Right lobe of liver (tissue), 6 donors: ENCODE measurements at regions of chrX and their contacts with region 1.

Region 1: GRCh38 chrX:154980330-154981096 is 42.0 kb downstream of the F8 start:
- DNase-seq: peak; percentile 55 to 73 (median 72)
- ATAC-seq: peak; percentile 98 to 99 (median 99)
- H3K4me3 ChIP-seq: peak overlapping the region; percentile 25 to 50 (median 34)
- H3K27ac ChIP-seq: no peak overlapping the region
- H3K4me1 ChIP-seq: no peaks in the 10 kb centered on the region
- H3K27me3 ChIP-seq: no peaks in the 10 kb centered on the region
- CTCF ChIP-seq: peak; percentile 69 to 85 (median 83)
- POLR2A ChIP-seq: no peak

Region 2: DNA sequence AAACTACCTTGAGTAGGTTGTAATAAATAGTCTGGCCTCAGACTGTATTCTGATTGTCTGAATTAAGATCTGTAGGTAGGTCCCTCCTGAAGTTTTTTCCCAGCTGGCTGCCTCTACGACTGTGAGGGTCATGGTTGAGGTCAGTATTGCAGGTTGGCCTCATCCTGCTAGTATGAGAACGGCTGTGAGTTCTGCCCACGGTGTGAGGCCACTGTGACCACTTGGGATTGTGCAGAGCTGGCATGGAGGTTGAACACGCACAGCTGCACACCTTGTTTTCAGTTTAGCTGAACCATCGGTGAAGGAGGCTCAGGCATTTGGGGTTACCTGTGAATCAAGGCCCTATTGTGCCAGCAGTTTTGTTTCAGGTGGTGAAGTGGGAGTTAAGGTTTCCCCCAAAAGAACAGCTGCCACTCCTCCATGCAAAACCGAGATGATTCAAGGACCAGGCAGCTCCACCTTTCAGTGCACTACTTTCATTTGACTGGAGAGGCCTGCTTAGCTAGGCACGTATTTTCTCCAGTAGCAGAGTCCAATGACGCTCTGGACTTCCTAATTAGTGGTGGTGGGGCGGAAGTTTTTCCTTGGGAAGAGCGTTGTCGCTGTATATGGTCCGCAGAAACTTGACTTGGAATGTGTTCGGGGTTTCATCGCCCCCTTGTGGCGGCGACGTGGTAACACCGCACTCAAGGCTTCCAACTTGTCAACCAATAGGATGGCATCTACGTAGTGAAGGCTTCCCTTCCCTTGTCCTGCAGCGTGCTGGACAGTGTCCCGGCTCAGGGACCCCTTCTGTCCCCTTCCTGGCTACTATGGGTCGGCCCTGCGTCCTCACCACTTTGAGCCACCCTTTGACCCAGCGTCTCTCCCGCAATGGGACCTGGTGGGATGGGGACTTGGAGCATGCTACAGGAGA is 76.6 kb after region 1 on chrX:
- intact Hi-C with region 1: loop called in 1 of 2 experiments (anchors 10 kb)
- DNase-seq: peak; percentile 59 to 69 (median 65)
- ATAC-seq: peak; percentile 84 to 94 (median 90)
- H3K4me3 ChIP-seq: no peak overlapping the region
- H3K27ac ChIP-seq: peak overlapping the region in 2 of 3 donors; percentile 8 to 53
- H3K4me1 ChIP-seq: peaks cover 0 to 7% (median 3%) of the 10 kb centered on the region in 4 donors
- H3K27me3 ChIP-seq: peaks cover 0 to 3% of the 10 kb centered on the region in 2 donors
- CTCF ChIP-seq: peak; percentile 72 to 86 (median 79)
- POLR2A ChIP-seq: no peak

Region 3: DNA sequence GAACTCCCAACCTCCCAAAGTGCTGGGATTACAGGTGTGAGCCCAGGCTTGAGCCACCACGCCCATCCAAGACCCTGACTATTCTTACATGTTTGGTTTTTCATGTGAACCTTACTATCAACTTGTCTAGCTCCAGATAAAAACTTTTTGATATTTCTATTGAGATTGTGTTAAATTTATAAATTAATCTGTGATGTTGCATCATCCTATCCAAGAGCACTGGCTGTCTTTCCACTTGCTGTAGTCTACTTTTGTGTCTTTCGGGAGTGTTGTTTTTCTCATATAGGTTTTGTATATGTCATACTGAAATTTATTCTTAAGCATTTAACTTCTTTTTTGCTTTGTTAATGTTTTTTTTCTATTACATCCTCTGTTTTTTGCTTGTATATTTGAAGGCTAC is 125.4 kb after region 1 on chrX:
- intact Hi-C with region 1: no loop called
- DNase-seq: no peak
- ATAC-seq: no peak
- H3K4me3 ChIP-seq: no peak overlapping the region
- H3K27ac ChIP-seq: no peak overlapping the region
- H3K4me1 ChIP-seq: no peaks in the 10 kb centered on the region
- H3K27me3 ChIP-seq: no peaks in the 10 kb centered on the region
- CTCF ChIP-seq: no peak
- POLR2A ChIP-seq: no peak